HepG2 (cell line): ENCODE measurements at regions of chr10 and their contacts with region 1.

Region 1: GRCh38 chr10:6647811-6648526 is 67.9 kb upstream of the PRKCQ start:
- DNase-seq: peak; percentile 36
- ATAC-seq: peak; percentile 98
- H3K4me3 ChIP-seq: no peak overlapping the region
- H3K27ac ChIP-seq: no peak overlapping the region
- H3K4me1 ChIP-seq: no peaks in the 10 kb centered on the region
- H3K27me3 ChIP-seq: peaks cover 0 to 4% of the 10 kb centered on the region in 2 experiments; a peak in 3 of 5 replicates
- CTCF ChIP-seq: peak; percentile 68
- EP300 ChIP-seq: no peak
- POLR2A ChIP-seq: no peak
- RAD21 ChIP-seq: no peak

Region 2: DNA sequence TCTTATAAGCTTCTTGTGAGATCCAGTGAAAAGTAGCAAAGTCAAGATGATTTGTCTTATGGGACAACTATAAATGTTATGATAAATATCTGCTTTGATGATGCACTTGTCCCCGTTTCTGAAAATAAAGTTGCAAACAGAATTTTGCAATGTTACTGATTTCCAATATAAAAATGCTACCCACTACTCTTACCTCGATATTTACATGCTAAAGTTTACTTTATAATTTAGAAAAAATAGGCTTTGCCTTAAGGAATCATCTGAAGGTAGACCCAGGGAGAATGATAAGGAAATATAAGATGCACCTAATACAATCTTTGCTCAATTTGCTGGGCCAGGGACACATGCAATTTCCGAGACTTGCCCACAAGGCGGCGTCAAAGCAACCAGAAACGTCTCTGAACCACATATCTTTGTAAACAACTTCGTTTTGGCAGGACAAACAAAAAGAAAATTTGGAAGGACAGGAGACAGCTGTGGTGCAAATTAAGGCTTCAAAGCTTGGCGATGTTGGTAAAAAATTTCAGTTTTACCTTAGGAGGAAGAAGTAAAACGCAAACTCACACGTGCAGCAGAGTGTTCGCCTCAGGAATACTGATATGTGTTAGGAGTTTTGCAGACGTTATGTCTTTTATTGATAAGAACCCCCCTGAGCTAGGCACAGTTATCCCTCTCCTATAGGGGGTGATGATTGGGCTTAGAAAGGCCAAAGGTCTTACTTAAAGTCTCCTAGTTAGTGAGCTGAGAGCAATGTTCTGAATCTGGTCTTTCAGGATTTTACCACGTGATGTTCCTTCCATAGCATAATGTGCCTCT is 202.3 kb before region 1 on chr10:
- CTCF ChIA-PET with region 1: interaction called, 6 read pairs
- POLR2A ChIA-PET with region 1: no interaction called
- in situ Hi-C with region 1: no loop called
- intact Hi-C with region 1: loop called (anchors 5 kb)
- DNase-seq: peak; percentile 10
- ATAC-seq: peak; percentile 32; the same call in 1 of the 3 replicates
- H3K4me3 ChIP-seq: no peak overlapping the region
- H3K27ac ChIP-seq: no peak overlapping the region
- H3K4me1 ChIP-seq: no peaks in the 10 kb centered on the region
- H3K27me3 ChIP-seq: peaks cover 0 to 3% of the 10 kb centered on the region in 2 experiments; a peak in 1 of 5 replicates
- CTCF ChIP-seq: peak; percentile 58
- EP300 ChIP-seq: no peak
- POLR2A ChIP-seq: no peak
- RAD21 ChIP-seq: no peak

Region 3: DNA sequence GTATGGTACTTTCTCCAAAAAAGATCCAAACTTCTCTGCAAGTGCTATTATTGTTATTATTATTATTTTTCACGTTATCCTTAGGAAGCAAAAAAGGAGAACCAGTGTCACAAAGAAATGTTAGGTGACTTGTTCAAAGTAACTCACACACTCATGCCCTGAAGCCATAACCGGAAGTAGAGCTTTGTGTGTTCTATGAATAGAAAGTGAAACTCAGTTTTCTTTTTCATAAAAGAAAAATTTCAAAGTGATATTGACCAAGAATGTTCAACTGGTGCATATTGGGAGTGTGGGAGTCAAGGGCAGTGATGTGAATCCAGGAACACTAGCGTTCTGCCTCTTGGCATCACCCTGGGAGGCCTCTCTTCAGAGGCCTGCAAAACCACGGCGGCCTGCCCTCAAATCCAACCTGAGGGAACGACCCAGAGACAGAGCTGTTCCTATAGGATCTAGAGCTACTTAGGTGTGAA is 174.0 kb before region 1 on chr10:
- CTCF ChIA-PET with region 1: no interaction called
- POLR2A ChIA-PET with region 1: no interaction called
- in situ Hi-C with region 1: no loop called
- intact Hi-C with region 1: no loop called
- DNase-seq: no peak
- ATAC-seq: no peak
- H3K4me3 ChIP-seq: no peak overlapping the region
- H3K27ac ChIP-seq: no peak overlapping the region
- H3K4me1 ChIP-seq: no peaks in the 10 kb centered on the region
- H3K27me3 ChIP-seq: no peaks in the 10 kb centered on the region
- CTCF ChIP-seq: no peak
- EP300 ChIP-seq: no peak
- POLR2A ChIP-seq: no peak
- RAD21 ChIP-seq: no peak

Region 4: DNA sequence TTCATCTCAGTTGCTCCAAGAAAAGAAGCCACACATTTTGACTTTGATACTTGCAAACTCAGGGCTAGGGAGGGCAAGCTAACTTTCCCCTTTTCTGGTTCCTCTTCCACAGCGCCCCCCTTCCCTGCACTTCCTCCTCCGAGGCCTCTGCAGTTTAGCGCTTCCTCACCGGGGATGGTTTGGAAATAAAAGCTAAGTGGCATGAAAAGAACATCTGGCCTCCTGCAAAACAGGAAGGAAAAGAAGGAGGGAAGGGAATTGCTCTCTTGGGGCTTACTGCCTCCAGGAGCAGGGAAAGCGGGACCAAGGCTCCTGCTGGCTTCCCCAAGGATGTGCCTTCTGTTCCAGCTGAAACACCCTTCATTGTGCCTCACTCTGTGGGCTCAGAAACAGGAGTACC is 110.2 kb before region 1 on chr10:
- CTCF ChIA-PET with region 1: no interaction called
- POLR2A ChIA-PET with region 1: no interaction called
- in situ Hi-C with region 1: no loop called
- intact Hi-C with region 1: no loop called
- DNase-seq: no peak
- ATAC-seq: no peak
- H3K4me3 ChIP-seq: no peak overlapping the region
- H3K27ac ChIP-seq: no peak overlapping the region
- H3K4me1 ChIP-seq: no peaks in the 10 kb centered on the region
- H3K27me3 ChIP-seq: peaks cover 0 to 10% of the 10 kb centered on the region in 2 experiments; a peak in 2 of 5 replicates
- CTCF ChIP-seq: no peak
- EP300 ChIP-seq: no peak
- POLR2A ChIP-seq: no peak
- RAD21 ChIP-seq: no peak

Region 5: GRCh38 chr10:6565588-6565987 is 82.4 kb before region 1 on chr10:
- CTCF ChIA-PET with region 1: no interaction called
- POLR2A ChIA-PET with region 1: no interaction called
- in situ Hi-C with region 1: no loop called
- intact Hi-C with region 1: no loop called
- DNase-seq: no peak
- ATAC-seq: no peak
- H3K4me3 ChIP-seq: no peak overlapping the region
- H3K27ac ChIP-seq: no peak overlapping the region
- H3K4me1 ChIP-seq: no peaks in the 10 kb centered on the region
- H3K27me3 ChIP-seq: peaks cover 6 to 36% of the 10 kb centered on the region in 2 experiments; a peak in 4 of 5 replicates
- CTCF ChIP-seq: no peak
- EP300 ChIP-seq: no peak
- POLR2A ChIP-seq: no peak
- RAD21 ChIP-seq: no peak

Region 6: DNA sequence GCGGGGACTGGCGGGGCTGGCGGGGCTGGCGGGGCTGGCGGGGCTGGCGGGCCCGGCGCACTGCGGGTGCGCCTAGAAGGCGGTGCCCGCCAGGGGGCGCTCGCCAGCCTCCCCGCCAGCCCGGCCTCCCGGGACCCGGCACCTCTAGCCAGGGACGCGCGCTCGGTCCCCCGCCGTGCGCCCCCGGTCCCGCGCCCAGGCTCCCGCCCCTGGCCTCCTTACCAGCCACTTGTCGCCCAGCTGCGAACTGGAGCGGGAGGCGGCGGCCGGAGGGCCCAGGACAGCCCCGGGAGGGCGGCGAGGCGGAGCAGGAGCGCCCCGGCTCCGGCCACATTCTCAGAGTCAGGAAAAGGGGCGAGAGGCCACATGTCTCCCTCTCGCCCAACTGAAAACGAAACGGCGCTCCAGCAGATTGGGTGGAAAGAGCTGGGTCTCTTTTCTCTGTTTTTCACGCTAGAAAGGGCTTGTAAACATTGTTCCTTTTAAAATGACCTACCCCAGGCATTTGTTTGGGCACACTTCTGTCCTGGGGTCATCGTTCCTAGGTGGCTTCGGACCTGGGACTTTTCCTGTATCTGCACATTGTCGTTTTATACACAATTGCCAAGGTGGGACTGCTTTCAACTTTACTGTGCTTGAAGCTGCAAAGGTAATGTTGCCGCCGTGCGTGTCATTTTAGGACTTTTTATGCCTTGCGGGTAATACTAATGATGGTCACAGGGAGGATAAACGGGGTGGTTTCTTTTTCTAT is 67.5 kb before region 1 on chr10:
- CTCF ChIA-PET with region 1: no interaction called
- POLR2A ChIA-PET with region 1: no interaction called
- in situ Hi-C with region 1: no loop called
- intact Hi-C with region 1: loop called (anchors 1 kb)
- DNase-seq: peak; percentile 53
- ATAC-seq: peak; percentile 97
- H3K4me3 ChIP-seq: peak overlapping the region; percentile 57 to 80 (median 76)
- H3K27ac ChIP-seq: peak overlapping the region; percentile 54
- H3K4me1 ChIP-seq: peaks cover 18% of the 10 kb centered on the region; the same call in 1 of the 2 replicates
- H3K27me3 ChIP-seq: peaks cover 2 to 24% of the 10 kb centered on the region in 2 experiments; a peak in 3 of 5 replicates
- CTCF ChIP-seq: peak; percentile 53; the same call in 1 of the 2 replicates
- EP300 ChIP-seq: no peak
- POLR2A ChIP-seq: peak; percentile 22 to 42; a peak in 2 of 4 replicates
- RAD21 ChIP-seq: peak; percentile 54; the same call in 1 of the 2 replicates